ENCODE measurements at regions of chr22 and their contacts with region 1.

Region 1: GRCh38 chr22:30920407-30920806 is 48.2 kb downstream of the MORC2 start:
- DNase-seq: peak; percentile 76 to 89 (median 86)
- H3K4me3 ChIP-seq: no peak overlapping the region
- H3K27ac ChIP-seq: no peak overlapping the region
- H3K4me1 ChIP-seq: no peaks in the 10 kb centered on the region
- H3K27me3 ChIP-seq: no peaks in the 10 kb centered on the region
- CTCF ChIP-seq: peak; percentile 69 to 90 (median 72)
- EP300 ChIP-seq: no peak
- POLR2A ChIP-seq: no peak

Region 2: DNA sequence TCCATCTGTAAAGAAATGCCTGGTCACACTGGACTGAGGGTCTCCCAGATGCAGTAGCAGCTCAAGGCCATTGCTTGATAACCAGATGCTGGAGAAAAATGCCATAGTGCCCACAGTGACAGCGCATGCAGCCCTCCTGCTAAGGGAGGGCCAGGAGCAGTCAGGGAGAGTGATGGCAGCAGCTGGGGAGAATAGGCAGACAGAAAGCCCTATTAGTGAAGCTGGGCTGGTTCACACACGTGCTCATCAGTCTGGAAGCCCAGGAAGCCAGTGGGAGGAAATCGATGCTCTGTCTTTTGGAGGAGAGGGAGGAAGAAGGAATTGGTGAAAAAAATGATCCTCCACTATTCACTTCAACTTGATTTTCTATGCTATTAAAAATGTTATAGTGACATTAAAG is 142.8 kb before region 1 on chr22:
- intact Hi-C with region 1: loop called in 1 of 4 experiments (anchors 10 kb)
- DNase-seq: no peak
- H3K4me3 ChIP-seq: no peak overlapping the region
- H3K27ac ChIP-seq: no peak overlapping the region
- H3K4me1 ChIP-seq: no peaks in the 10 kb centered on the region
- H3K27me3 ChIP-seq: no peaks in the 10 kb centered on the region
- CTCF ChIP-seq: no peak
- EP300 ChIP-seq: no peak
- POLR2A ChIP-seq: no peak

Region 3: DNA sequence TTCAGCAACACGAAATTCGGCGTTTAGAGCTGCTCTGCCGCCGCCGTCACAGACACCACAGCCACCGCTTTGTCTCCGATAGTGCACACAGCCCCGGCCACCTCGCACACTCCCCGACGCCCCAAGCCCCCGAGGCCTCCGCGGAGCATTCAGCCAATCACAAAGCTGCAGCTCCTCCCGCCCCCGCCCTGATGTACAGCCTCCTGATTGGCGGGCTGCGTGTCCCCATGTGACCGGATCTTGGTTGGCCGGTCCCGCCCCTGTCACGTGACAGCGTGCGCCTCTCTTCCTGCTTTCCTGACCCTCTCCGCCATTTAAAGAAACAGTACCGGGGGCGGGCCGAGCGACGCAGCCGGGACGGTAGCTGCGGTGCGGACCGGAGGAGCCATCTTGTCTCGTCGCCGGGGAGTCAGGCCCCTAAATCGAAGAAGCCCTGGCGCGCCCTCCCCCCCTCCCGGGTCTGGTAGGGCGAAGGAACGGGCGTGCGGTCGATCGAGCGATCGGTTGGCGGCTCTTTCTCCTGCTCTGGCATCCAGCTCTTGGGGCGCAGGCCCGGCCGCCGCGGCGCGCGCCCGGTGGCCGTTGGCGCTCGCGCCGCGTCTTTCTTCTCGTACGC is 48.6 kb after region 1 on chr22 and contains the start of gene TUG1:
- intact Hi-C with region 1: no loop called
- DNase-seq: peak; percentile 98 to 99 (median 98)
- H3K4me3 ChIP-seq: peak within 1 kb of the TSS; percentile 89
- H3K27ac ChIP-seq: peak within 1 kb of the TSS; percentile 85 to 88
- H3K4me1 ChIP-seq: peaks cover 3% of the 10 kb centered on the region
- H3K27me3 ChIP-seq: no peaks in the 10 kb centered on the region
- CTCF ChIP-seq: peak in 1 of 3 donors; percentile 8
- EP300 ChIP-seq: no peak
- POLR2A ChIP-seq: peak; percentile 76
- total RNA-seq, gene TUG1: 71.8 to 101 (median 78.7) TPM

Region 4: GRCh38 chr22:31068970-31069369 is 148.6 kb after region 1 on chr22:
- intact Hi-C with region 1: no loop called
- DNase-seq: no peak
- H3K4me3 ChIP-seq: no peak overlapping the region
- H3K27ac ChIP-seq: no peak overlapping the region
- H3K4me1 ChIP-seq: no peaks in the 10 kb centered on the region
- H3K27me3 ChIP-seq: no peaks in the 10 kb centered on the region
- CTCF ChIP-seq: no peak
- EP300 ChIP-seq: no peak
- POLR2A ChIP-seq: no peak

Region 5: GRCh38 chr22:31148953-31149627 is 228.7 kb after region 1 on chr22:
- intact Hi-C with region 1: no loop called
- DNase-seq: peak; percentile 70 to 77 (median 72)
- H3K4me3 ChIP-seq: no peak overlapping the region
- H3K27ac ChIP-seq: no peak overlapping the region
- H3K4me1 ChIP-seq: no peaks in the 10 kb centered on the region
- H3K27me3 ChIP-seq: no peaks in the 10 kb centered on the region
- CTCF ChIP-seq: peak; percentile 61 to 84 (median 62)
- EP300 ChIP-seq: no peak
- POLR2A ChIP-seq: no peak